ENCODE measurements at regions of chr16 and their contacts with region 1.

Region 1: DNA sequence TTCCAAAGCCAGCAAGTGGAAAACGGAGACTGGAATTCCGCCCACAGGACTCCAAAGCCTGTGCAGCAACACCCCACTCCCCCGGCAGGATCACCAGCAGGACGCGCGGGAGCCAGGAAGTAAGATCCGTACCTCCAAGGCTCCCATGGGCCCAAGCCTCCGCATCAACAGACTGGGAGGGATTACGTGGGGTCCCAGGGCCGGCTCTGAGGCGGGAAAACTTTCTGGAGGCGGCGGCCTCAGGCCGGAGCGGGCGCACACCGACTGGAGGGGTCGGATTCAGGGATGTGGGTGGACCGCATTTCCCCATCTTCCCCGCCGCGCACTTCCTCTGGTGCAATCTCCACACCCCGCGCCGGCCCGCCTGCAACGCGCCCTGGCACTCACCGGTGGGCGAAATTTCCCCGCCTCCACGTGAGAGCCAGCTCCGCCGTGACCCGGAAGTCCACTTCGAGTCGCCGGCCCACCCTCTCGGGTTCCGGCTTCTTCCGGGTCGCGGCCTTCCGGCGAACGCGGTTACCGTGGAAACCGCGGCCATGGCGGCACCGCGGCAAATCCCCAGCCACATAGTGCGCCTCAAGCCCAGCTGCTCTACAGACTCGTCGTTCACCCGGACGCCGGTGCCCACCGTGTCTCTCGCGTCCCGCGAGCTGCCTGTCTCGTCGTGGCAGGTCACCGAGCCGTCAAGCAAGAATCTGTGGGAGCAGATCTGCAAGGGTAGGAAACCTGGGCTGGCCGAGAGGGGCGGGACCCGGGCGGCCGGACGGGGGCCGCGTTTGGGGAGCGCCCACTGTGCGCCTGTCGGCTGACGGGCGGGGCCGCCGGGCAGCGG is at the starts of genes IQCK and KNOP1:
- DNase-seq: peak; percentile 86 to 95 (median 88)
- ATAC-seq: peak; percentile 96 to 99 (median 98)
- H3K4me3 ChIP-seq: peak within 1 kb of the TSS; percentile 97 to 100 (median 100)
- H3K27ac ChIP-seq: peak within 1 kb of the TSS; percentile 46 to 76 (median 61)
- H3K4me1 ChIP-seq: peaks cover 6 to 23% (median 12%) of the 10 kb centered on the region in 3 donors
- H3K27me3 ChIP-seq: no peaks in the 10 kb centered on the region
- CTCF ChIP-seq: no peak
- total RNA-seq, gene IQCK: 6.7 to 15.5 (median 10.4) TPM
- total RNA-seq, gene KNOP1: 4.4 to 13.9 (median 7.4) TPM

Region 2: GRCh38 chr16:19810817-19811731 is 93.1 kb after region 1 on chr16:
- intact Hi-C with region 1: loop called in 1 of 3 experiments (anchors 10 kb)
- DNase-seq: no peak
- ATAC-seq: peak in 3 of 4 donors; percentile 11 to 17 (median 16)
- H3K4me3 ChIP-seq: no peak overlapping the region
- H3K27ac ChIP-seq: peak overlapping the region; percentile 46 to 91 (median 75)
- H3K4me1 ChIP-seq: peaks cover 26 to 35% (median 32%) of the 10 kb centered on the region in 3 donors
- H3K27me3 ChIP-seq: no peaks in the 10 kb centered on the region
- CTCF ChIP-seq: no peak

Region 3: GRCh38 chr16:19872179-19872863 is 154.3 kb after region 1 on chr16:
- intact Hi-C with region 1: no loop called
- DNase-seq: peak in 1 of 6 donors; percentile 58
- ATAC-seq: no peak
- H3K4me3 ChIP-seq: no peak overlapping the region
- H3K27ac ChIP-seq: no peak overlapping the region
- H3K4me1 ChIP-seq: no peaks in the 10 kb centered on the region
- H3K27me3 ChIP-seq: no peaks in the 10 kb centered on the region
- CTCF ChIP-seq: no peak

Region 4: DNA sequence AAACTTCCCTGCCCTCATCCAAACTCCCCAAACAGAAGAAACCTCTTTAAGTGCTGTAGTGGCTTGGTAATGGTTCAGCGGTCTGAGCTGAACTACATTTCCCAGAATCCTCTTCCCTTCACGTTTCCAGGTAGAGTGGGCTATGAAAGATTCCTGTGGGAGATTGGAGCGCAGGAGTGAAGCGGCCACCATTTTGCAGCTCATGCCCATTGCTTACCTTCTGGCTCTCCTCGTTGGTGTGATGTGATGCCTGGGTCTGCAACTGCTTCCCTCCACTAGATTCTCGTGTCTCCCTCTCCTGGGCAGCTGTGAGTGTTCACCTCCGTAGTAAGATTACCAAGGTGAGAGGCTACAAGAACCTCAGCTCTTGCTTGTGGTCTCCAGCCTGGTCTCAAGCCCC is 273.6 kb after region 1 on chr16:
- intact Hi-C with region 1: no loop called
- DNase-seq: no peak
- ATAC-seq: no peak
- H3K4me3 ChIP-seq: no peak overlapping the region
- H3K27ac ChIP-seq: no peak overlapping the region
- H3K4me1 ChIP-seq: no peaks in the 10 kb centered on the region
- H3K27me3 ChIP-seq: no peaks in the 10 kb centered on the region
- CTCF ChIP-seq: no peak